Motor neuron (in vitro differentiated cells): ENCODE measurements at regions of chr6 and their contacts with region 1.

Region 1: GRCh38 chr6:50816115-50816675 is 2.5 kb upstream of the TFAP2B start:
- ATAC-seq: peak in 7 of 8 experiments; percentile 43 to 84 (median 49)
- H3K4me3 ChIP-seq: peak overlapping the region; percentile 7 to 37 (median 18)
- H3K27ac ChIP-seq: no peak overlapping the region
- H3K4me1 ChIP-seq: peaks cover 0 to 11% of the 10 kb centered on the region in 2 donors

Region 2: DNA sequence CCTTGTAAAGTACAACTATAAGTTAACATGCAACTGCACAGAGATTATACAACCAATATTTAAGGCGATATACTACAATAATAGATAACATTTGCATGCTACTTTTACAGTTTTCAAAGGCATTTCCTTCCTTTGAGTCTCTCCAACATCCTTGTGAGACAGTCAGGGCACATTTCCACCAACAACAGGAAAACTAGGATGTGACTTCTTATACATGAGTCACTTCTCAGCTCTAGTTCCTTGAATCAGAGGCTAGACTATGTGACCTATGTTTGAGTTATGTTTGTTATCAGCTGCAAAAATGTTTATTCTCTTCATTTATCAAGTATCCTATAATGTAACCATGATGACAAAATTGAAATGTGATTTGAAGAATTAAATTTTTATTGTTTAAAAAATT is 154.6 kb before region 1 on chr6:
- in situ Hi-C with region 1: no loop called
- ATAC-seq: no peak
- H3K4me3 ChIP-seq: no peak overlapping the region
- H3K27ac ChIP-seq: no peak overlapping the region
- H3K4me1 ChIP-seq: no peaks in the 10 kb centered on the region

Region 3: DNA sequence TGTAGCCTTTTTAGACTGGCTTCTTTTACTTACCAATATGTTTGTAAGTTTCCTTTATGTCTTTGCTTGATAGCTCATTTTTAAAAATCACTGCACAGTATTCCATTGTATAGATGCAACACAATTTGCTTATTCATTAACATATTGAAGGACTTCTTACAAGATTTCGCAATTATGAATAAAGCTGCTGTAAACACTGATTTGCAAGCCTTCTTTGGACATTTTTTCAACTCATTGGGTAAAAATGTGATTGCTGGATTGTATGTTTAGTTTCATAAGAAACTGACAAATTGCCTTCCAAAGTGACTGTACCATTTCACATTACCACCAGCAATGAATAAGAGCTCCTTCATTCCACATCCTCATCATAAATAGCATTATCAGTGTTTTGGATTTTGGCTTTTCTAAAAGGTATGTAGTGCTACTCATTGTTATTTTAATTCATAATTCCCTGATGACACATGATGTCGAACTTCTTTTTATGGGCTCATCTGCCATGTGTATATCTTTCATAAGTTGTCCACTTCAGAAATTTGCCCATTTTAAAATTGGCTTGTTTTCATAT is 83.2 kb after region 1 on chr6:
- in situ Hi-C with region 1: no loop called
- ATAC-seq: peak in 3 of 8 experiments; percentile 49 to 81 (median 60)
- H3K4me3 ChIP-seq: no peak overlapping the region
- H3K27ac ChIP-seq: no peak overlapping the region
- H3K4me1 ChIP-seq: no peaks in the 10 kb centered on the region

Region 4: DNA sequence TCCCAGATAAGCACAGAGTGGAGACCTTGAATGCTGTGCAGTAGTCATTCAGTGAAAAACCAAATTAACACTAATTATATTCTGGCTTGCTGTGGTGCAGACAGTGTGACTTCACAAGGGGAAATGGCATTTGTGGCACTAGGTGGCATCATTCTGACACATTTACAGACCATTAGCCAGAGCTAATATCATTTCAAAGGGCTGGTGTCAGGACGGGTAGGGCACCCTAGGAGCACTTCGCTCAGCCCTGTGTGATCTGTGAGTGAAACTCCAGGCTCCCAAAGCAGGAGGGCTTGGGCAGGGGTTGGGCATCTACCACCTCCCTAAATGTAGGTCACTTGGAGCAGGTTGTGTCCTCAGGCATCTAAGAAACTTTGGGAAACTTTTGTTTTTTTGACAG is 715.4 kb after region 1 on chr6:
- in situ Hi-C with region 1: loop called in 3 of 9 experiments (anchors 10 to 25 kb)
- ATAC-seq: peak in 2 of 8 experiments; percentile 26 to 61
- H3K4me3 ChIP-seq: no peak overlapping the region
- H3K27ac ChIP-seq: no peak overlapping the region
- H3K4me1 ChIP-seq: no peaks in the 10 kb centered on the region

Region 5: GRCh38 chr6:51805517-51805916 is 989.3 kb after region 1 on chr6:
- in situ Hi-C with region 1: loop called in 1 of 9 experiments (anchors 25 kb)
- ATAC-seq: no peak
- H3K4me3 ChIP-seq: no peak overlapping the region
- H3K27ac ChIP-seq: no peak overlapping the region
- H3K4me1 ChIP-seq: no peaks in the 10 kb centered on the region

Region 6: GRCh38 chr6:51959744-51960383 is 1143.7 kb after region 1 on chr6:
- in situ Hi-C with region 1: loop called in 6 of 9 experiments (anchors 10 to 25 kb)
- ATAC-seq: peak; percentile 40 to 92 (median 72)
- H3K4me3 ChIP-seq: no peak overlapping the region
- H3K27ac ChIP-seq: no peak overlapping the region
- H3K4me1 ChIP-seq: no peaks in the 10 kb centered on the region